A673 (cell line): ENCODE measurements at regions of chr1 and their contacts with region 1.

Region 1: DNA sequence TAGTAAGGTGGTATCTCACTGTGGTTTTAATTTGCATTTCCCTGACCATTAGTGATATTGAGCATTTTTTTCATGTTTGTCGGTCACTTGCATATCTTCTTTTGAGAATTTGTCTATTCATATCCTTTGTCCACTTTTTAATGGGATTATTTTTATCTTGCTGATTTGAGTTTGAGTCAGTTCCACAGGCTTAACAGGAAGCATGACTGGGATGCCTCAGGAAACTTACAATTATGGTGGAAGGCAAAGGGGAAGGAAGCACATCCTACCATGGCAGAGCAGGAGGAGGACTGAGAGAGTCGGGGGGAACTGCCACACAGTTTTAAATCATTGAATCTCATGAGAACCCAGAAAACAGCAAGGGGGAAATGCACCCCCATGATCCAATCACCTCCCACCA is 51.1 kb downstream of the ODF2L start:
- DNase-seq: peak; percentile 9
- H3K4me3 ChIP-seq: no peak overlapping the region
- H3K27ac ChIP-seq: no peak overlapping the region
- H3K4me1 ChIP-seq: no peaks in the 10 kb centered on the region
- H3K27me3 ChIP-seq: no peaks in the 10 kb centered on the region
- CTCF ChIP-seq: no peak

Region 2: DNA sequence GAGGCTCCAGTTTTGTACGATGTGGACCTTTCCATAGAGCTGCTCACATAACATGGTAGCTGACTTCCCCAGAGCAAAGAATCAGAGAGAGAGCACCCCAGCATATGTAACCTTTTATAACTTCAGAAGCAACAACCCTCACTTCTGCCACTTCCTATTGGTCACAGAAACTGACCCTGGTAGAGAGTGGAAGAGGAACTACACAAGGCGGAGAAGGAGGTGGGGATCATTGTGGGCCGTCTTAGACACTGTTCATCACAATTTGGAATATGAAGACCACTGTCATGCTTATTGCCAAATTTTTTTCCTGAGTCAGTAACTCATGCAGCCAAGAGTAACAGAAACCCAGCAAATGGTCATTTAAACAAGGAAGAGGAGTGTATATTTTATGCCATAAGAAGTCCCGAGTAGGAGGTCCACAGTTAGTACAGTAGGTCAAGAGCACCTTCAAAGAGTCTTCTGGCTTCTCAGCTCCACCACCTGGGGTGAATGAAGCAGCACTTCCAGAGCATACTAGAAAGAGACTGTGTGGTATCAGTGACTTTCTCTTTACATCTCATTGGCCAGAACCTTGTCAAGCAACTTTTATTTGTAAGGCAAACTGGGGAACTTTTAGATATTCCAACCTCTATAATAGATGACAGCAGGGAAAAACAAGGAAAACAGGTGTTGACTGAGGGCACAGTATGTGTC is 20.8 kb before region 1 on chr1:
- CTCF ChIA-PET with region 1: no interaction called
- POLR2A ChIA-PET with region 1: no interaction called
- intact Hi-C with region 1: no loop called
- DNase-seq: no peak
- H3K4me3 ChIP-seq: no peak overlapping the region
- H3K27ac ChIP-seq: no peak overlapping the region
- H3K4me1 ChIP-seq: peaks cover 3% of the 10 kb centered on the region
- H3K27me3 ChIP-seq: no peaks in the 10 kb centered on the region
- CTCF ChIP-seq: no peak

Region 3: GRCh38 chr1:86409416-86410021 is 64.5 kb after region 1 on chr1:
- CTCF ChIA-PET with region 1: no interaction called
- POLR2A ChIA-PET with region 1: no interaction called
- intact Hi-C with region 1: loop called (anchors 10 kb)
- DNase-seq: peak; percentile 32
- H3K4me3 ChIP-seq: no peak overlapping the region
- H3K27ac ChIP-seq: no peak overlapping the region
- H3K4me1 ChIP-seq: no peaks in the 10 kb centered on the region
- H3K27me3 ChIP-seq: no peaks in the 10 kb centered on the region
- CTCF ChIP-seq: no peak